ENCODE measurements at regions of chr20 and their contacts with region 1.

Region 1: GRCh38 chr20:42959996-42960395 is 229.7 kb downstream of the PTPRT start:
- DNase-seq: no peak
- ATAC-seq: no peak
- H3K4me3 ChIP-seq: no peak overlapping the region
- H3K27ac ChIP-seq: no peak overlapping the region
- H3K4me1 ChIP-seq: no peaks in the 10 kb centered on the region
- H3K27me3 ChIP-seq: peaks cover 2% of the 10 kb centered on the region; the same call in 1 of the 2 replicates
- CTCF ChIP-seq: no peak

Region 2: GRCh38 chr20:42923348-42923918 is 36.6 kb before region 1 on chr20:
- CTCF ChIA-PET with region 1: no interaction called
- POLR2A ChIA-PET with region 1: no interaction called
- in situ Hi-C with region 1: no loop called
- intact Hi-C with region 1: no loop called
- DNase-seq: no peak
- ATAC-seq: no peak
- H3K4me3 ChIP-seq: no peak overlapping the region
- H3K27ac ChIP-seq: no peak overlapping the region
- H3K4me1 ChIP-seq: no peaks in the 10 kb centered on the region
- H3K27me3 ChIP-seq: no peaks in the 10 kb centered on the region; the same call in 1 of the 2 replicates
- CTCF ChIP-seq: no peak

Region 3: GRCh38 chr20:42938441-42939205 is 21.4 kb before region 1 on chr20:
- CTCF ChIA-PET with region 1: no interaction called
- POLR2A ChIA-PET with region 1: interaction called, 13 read pairs
- in situ Hi-C with region 1: no loop called
- intact Hi-C with region 1: no loop called
- DNase-seq: no peak
- ATAC-seq: no peak
- H3K4me3 ChIP-seq: no peak overlapping the region
- H3K27ac ChIP-seq: no peak overlapping the region
- H3K4me1 ChIP-seq: no peaks in the 10 kb centered on the region
- H3K27me3 ChIP-seq: no peaks in the 10 kb centered on the region; the same call in 1 of the 2 replicates
- CTCF ChIP-seq: no peak

Region 4: GRCh38 chr20:42949950-42950349 is 10.0 kb before region 1 on chr20:
- CTCF ChIA-PET with region 1: no interaction called
- POLR2A ChIA-PET with region 1: no interaction called
- in situ Hi-C with region 1: no loop called
- intact Hi-C with region 1: no loop called
- DNase-seq: no peak
- ATAC-seq: no peak
- H3K4me3 ChIP-seq: no peak overlapping the region
- H3K27ac ChIP-seq: no peak overlapping the region
- H3K4me1 ChIP-seq: no peaks in the 10 kb centered on the region
- H3K27me3 ChIP-seq: no peaks in the 10 kb centered on the region
- CTCF ChIP-seq: no peak

Region 5: DNA sequence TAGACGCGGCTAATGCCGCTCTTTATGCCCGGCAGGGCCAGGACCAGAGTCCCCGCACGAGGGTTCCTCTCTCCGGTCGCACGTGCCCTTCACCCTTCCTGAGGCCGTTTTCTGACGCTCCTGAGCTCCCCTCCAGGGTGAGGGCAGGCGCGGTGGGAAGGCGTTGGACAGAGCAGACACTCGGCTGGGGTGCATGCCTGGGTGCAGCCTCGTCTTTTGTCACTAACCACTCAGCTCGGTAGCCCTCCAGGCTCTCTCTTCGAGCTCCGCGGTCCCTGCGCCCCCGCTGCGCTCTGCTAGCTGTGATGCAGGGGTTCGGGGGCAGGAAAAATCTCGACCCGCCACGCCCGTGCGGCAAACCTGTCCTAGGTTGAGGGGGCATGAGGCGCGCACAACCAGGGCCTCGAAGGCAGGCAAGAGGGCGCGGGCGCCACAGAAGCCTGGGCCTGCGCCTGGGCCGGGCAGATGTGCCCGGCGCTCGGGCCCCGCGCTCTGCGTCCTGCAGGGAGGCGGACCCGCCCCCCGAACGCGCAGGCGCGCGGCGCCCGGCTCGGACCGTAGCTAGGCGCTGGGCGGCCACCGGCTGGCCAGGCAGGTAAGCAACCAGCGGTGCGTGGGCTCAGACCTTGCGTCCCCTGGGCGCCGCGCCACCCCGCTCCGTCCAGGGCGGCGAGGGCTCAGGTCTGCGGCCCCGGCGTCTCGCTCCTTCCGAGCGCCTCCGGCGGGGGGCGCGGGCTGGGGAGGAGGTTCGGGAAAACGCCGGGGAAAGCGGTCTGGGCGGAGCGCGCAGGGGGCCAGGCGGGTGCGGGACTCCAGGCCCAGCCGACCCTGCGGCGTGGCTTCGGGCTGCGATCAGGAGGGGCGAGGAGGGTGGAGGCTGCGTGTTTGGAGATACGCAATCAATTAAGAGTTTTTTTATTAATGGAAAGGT is 547.4 kb after region 1 on chr20 and contains the start of gene L3MBTL1:
- CTCF ChIA-PET with region 1: no interaction called
- POLR2A ChIA-PET with region 1: no interaction called
- in situ Hi-C with region 1: no loop called
- intact Hi-C with region 1: no loop called
- DNase-seq: no peak
- ATAC-seq: peak; percentile 98
- H3K4me3 ChIP-seq: peak within 1 kb of the TSS; percentile 69 to 73
- H3K27ac ChIP-seq: peak within 1 kb of the TSS; percentile 67
- H3K4me1 ChIP-seq: no peaks in the 10 kb centered on the region; the same call in 1 of the 2 replicates
- H3K27me3 ChIP-seq: no peaks in the 10 kb centered on the region
- CTCF ChIP-seq: no peak; the same call in 1 of the 2 replicates
- total RNA-seq, gene L3MBTL1: 24.9 TPM